Sciatic nerve (tissue), 2 donors: ENCODE measurements at regions of chr7 and their contacts with region 1.

Region 1: DNA sequence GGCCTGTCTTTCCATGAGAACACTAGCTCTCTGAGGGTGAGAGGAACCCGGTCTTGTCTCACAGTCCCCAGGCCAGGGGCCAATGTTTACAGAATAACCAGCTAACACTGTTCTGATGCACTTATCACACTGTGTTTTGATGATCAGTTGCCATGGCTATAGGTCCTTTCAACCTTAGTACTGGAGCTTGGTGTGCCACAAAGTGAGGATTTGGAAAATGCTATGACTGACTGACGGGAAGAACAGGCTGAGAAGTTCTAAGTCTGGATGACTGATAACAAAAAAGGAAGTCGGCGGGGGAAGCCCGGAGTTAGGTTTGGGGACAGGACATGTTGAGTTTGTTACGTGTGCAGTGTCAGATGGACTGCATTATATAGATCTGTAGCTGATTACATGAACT is 141.8 kb downstream of the CTTNBP2 start:
- DNase-seq: no peak
- ATAC-seq: no peak

Region 2: DNA sequence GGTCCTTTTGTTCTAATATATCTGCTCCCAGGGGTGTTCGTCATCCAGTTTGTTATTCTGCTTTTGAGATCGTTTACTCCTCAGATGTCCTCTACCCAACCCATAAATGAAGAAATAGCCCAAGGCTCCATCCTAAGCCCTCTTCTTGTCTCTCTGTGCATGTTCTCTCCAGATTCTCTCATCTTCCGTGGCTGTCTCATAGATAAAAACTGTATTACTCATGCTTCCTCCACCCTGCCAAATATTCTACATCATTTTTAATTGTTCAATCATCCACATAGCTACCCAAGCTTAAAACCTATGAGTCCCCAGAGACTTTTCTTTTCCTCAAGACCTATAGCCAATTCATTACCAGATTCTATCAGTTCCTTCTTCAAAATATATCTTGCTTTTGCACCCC is 1161.7 kb before region 1 on chr7:
- intact Hi-C with region 1: loop called (anchors 10 kb)
- DNase-seq: no peak
- ATAC-seq: no peak

Region 3: DNA sequence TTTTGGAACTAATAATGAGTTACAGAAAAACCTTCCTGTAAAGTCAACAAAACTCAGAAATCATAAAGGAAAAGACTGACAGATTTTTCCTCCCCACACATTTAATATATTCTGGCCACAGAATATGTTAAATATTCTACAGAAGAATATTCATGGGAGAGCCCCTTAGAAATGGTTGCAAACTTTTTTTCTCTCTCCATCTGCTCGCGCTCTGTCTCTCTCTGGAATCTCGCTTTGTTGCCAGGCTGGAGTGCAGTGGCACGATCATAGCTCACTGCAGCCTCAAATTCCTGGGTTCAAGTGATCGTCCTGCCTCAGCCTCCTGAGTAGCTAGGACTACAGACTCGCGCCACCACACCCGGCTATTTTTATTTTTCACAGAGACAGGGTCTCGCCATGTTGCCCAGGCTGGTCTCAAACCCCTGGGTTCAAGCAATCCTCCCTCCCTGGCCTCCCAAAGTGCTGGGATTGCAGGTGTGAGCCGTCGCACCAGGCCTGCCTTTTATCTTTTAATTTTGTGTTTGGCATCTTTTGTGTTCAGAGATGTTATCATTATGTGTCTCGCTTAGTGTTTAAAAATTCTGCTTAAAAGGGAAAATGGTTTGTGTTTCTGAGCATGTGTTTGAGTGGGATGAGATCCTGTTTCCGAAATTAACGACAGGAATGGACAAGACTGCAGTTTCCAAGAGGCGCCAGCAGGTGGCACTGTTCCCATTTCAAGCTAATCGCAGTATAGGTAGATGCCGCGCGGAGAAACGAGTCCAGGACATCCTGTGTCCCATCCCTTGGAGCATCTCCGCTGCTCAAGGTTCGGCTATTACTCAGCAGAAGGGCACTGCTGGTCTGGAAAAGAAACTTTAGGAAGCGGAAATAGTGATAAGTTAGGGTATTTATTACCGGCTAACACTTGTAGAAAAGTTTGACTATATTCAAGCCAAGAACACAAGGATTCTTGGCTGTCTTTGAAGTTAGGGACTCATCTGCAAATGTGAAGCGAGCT is 801.2 kb before region 1 on chr7:
- intact Hi-C with region 1: no loop called
- DNase-seq: peak; percentile 90
- ATAC-seq: peak; percentile 87